ENCODE measurements at regions of chr16 and their contacts with region 1.

Region 1: DNA sequence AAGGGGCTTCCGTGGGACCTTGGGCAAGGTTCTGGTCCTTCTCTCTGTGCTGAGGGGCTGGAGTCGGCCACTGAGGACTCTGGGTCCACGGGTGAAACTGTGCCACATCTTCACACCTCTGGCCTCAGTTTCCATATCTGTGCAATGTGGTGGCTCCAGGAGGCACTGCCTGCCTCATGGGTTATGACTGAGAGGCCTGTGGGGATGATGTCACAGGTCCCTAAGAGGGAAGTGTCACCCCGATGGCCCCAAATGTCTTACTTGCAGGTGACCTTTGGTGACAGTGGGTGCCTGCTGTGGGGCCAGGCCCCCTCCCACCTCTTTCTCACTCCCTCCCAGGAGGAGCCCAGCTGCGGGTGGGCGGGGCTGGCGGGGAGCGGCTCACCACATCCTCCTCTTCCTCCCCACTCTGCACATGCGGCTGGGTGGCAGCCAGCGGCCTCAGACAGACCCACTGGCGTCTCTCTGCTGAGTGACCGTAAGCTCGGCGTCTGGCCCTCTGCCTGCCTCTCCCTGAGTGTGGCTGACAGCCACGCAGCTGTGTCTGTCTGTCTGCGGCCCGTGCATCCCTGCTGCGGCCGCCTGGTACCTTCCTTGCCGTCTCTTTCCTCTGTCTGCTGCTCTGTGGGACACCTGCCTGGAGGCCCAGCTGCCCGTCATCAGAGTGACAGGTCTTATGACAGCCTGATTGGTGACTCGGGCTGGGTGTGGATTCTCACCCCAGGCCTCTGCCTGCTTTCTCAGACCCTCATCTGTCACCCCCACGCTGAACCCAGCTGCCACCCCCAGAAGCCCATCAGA is at the start of gene IL21R:
- DNase-seq: peak; percentile 87
- H3K4me3 ChIP-seq: peak within 1 kb of the TSS; percentile 74
- H3K27ac ChIP-seq: peak within 1 kb of the TSS; percentile 79
- H3K4me1 ChIP-seq: peaks cover 89% of the 10 kb centered on the region
- CTCF ChIP-seq: no peak
- total RNA-seq, gene IL21R: 10.0 and 10.9 TPM in 2 replicates

Region 2: DNA sequence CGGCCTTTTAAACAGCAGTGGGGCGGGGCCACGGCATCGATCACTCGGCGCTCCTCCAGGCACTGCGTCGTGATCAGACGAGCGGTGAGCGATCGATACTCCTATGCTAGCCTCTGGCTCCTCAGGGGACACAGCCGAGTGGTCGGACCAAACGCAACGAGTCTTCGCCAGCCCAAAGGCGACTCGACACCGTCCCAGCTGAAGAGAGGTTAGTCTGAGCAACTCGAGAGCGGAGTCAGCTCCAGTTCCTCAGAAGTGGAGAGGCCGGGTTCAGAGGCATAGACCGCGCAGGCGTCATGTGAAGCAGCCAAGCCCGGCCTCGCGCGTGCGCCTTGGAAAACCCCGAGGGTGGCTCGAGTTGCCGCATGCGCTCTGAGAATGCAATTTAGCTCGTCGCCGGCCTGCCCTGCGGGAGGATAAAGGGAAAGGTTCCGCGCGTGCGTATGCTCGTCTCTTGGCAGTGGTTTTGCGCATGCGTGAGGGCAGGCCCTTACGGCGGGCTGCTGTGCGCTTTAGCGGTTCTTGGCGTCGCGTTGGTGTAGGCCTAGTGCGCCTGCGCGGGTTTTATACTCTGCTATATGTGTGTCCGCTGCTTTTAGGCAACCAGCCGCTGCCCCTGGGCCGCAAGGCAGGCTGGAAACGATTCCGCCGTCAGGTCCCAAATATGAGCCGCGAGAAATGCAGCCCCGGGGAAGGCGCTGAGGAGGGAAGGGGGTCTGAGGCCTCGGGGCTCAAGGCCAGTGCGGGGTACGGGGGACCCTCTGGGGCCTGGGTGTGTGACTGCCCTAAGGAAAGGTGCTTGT is 198.3 kb before region 1 on chr16 and contains the start of gene KDM8:
- CTCF ChIA-PET with region 1: no interaction called
- POLR2A ChIA-PET with region 1: interaction called, 15 read pairs
- intact Hi-C with region 1: no loop called
- DNase-seq: peak; percentile 100
- H3K4me3 ChIP-seq: peak within 1 kb of the TSS; percentile 81
- H3K27ac ChIP-seq: peak within 1 kb of the TSS; percentile 89
- H3K4me1 ChIP-seq: peaks cover 62% of the 10 kb centered on the region
- CTCF ChIP-seq: no peak
- total RNA-seq, gene KDM8: 12.4 and 14.2 TPM in 2 replicates

Region 3: DNA sequence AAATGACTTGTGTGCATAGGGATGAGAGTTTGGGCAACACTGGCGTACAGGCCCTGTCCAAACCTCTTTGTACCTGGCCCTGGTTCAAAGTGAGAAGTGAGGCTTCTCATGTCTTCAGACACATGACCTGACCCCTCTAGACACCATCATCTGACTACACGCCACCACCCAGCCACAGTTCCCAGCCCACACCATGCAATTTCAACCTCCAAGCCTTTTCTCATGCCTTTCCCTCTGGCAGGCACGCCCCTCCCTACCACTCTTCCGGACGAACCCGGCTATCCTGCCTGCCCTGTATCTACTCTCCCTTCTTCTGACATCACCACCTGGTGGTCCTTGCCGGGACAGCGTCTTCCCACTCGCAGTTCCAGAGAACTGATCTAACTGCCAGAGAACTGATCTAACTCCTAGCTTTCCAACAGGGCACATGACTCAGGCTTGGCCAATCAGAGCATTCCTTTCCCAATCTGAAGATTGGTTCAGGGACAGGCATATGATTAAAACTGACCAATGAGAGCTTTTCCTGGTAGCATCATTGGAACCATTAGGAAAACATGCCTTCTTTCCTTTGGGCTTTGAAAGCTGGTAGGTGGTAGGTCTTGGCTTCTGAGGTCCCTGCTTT is 27.1 kb before region 1 on chr16:
- CTCF ChIA-PET with region 1: interaction called, 13 read pairs
- POLR2A ChIA-PET with region 1: interaction called, 44 read pairs
- intact Hi-C with region 1: loop called (anchors 1 kb)
- DNase-seq: peak; percentile 68
- H3K4me3 ChIP-seq: peak overlapping the region; percentile 43
- H3K27ac ChIP-seq: peak overlapping the region; percentile 70
- H3K4me1 ChIP-seq: peaks cover 55% of the 10 kb centered on the region
- CTCF ChIP-seq: peak; percentile 75

Region 4: GRCh38 chr16:27426423-27427408 is 24.7 kb after region 1 on chr16:
- CTCF ChIA-PET with region 1: interaction called, 11 read pairs
- POLR2A ChIA-PET with region 1: interaction called, 16 read pairs
- intact Hi-C with region 1: loop called (anchors 1 kb)
- DNase-seq: peak; percentile 94
- H3K4me3 ChIP-seq: peak overlapping the region; percentile 53
- H3K27ac ChIP-seq: peak overlapping the region; percentile 88
- H3K4me1 ChIP-seq: peaks cover 60% of the 10 kb centered on the region
- CTCF ChIP-seq: peak; percentile 48; the same call in 1 of the 2 replicates

Region 5: GRCh38 chr16:27449434-27450195 is 47.6 kb after region 1 on chr16:
- CTCF ChIA-PET with region 1: no interaction called
- POLR2A ChIA-PET with region 1: interaction called, 3 read pairs
- intact Hi-C with region 1: loop called (anchors 1 kb)
- DNase-seq: peak; percentile 23
- H3K4me3 ChIP-seq: no peak overlapping the region
- H3K27ac ChIP-seq: no peak overlapping the region
- H3K4me1 ChIP-seq: peaks cover 27% of the 10 kb centered on the region
- CTCF ChIP-seq: no peak